Activated CD4-positive, alpha-beta T cell treated with anti-CD3 and anti-CD28 coated beads, Interleukin-2, amount 10 ng/mL, durations not matched to agents 24 days and 14 days (primary cell): ENCODE measurements at regions of chr7 and their contacts with region 1.

Region 1: DNA sequence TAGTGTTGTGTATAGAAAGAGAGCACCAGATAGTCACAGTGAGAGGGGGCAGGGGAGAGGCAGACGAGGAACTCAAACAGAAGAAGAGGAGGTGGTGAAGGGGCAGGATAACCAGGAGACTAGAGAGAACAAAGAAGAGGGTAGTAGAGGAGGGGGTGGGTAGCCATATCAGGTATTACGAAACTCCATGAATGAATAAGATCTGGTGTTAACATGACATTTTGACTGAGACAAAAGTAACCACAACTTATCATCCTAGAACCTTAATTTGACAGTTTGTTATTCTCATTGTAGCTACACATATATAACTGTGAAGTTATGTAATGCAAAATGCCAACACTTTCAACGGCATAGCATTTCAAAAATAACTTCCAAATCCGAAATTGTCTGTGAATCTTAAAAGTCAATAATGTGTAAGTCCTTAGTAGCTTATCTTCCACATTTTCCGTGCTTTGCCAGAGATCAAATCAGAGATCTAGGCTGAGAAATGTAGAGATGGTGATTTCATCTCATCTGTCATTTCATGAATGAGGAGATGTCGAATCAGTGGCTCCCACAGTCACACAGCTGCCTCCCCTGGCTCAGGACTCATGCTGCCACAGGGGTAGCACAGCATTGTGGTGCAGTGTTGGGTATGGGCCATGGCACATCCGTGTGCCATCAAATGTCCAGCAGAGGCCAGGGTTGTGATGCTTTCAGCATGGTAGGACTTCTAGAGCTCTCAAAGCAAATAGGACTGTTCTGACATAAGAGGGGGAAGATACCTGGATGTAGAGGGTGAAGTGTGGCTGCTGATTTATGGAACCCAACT is 202.1 kb downstream of the HECW1 start:
- DNase-seq: no peak
- H3K4me3 Mint-ChIP-seq: no peak overlapping the region
- H3K27ac Mint-ChIP-seq: no peak overlapping the region
- H3K4me1 Mint-ChIP-seq: peaks cover 11% of the 10 kb centered on the region
- H3K27me3 Mint-ChIP-seq: peaks cover 3% of the 10 kb centered on the region

Region 2: DNA sequence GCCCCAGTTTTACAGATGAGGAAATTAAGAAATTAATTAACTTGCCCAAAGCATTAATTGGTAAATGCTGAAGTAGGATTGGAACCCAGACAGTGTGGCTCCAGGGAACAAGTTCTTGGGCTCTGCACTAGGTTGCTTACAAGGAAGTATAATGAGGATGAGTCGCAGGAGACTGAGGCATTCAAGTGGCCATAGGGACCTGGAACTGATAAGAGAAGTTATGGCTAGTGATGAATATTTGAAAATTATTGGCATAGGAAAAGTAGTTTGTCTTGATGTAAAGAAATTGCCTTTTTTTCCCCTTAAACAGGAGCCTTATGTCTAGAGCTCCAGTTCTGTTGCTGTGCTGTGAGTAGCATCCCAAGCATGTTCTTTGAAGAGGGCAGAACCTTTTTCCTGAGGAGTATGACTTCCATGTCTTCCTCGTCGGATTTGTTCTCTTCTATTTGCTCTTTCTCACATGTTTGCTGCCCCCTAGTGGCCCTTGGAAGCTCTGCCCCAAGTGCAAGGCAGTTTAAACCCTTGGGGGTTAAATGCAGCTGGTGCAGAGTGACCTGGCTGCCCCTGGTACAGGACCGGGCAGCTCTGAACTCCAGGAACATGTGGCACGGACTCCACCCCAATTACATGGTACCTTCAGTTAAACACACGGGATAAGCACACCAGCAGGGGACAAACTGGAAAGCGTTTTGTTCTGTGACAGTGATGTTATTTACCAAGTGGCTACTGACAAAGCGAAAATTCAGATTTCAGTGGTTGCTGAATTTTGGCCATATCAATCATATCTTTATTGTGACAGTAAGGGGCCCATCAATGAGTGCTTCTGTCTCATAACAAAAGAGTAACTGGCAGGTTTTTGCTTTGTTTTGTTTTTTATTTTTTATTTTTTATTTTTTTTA is 53.4 kb before region 1 on chr7:
- intact Hi-C with region 1: no loop called
- DNase-seq: peak; percentile 89
- H3K4me3 Mint-ChIP-seq: no peak overlapping the region
- H3K27ac Mint-ChIP-seq: no peak overlapping the region
- H3K4me1 Mint-ChIP-seq: peaks cover 2% of the 10 kb centered on the region
- H3K27me3 Mint-ChIP-seq: peaks cover 9% of the 10 kb centered on the region

Region 3: GRCh38 chr7:43273939-43274719 is 40.5 kb before region 1 on chr7:
- intact Hi-C with region 1: no loop called
- DNase-seq: no peak
- H3K4me3 Mint-ChIP-seq: no peak overlapping the region
- H3K27ac Mint-ChIP-seq: no peak overlapping the region
- H3K4me1 Mint-ChIP-seq: no peaks in the 10 kb centered on the region
- H3K27me3 Mint-ChIP-seq: peaks cover 5% of the 10 kb centered on the region

Region 4: DNA sequence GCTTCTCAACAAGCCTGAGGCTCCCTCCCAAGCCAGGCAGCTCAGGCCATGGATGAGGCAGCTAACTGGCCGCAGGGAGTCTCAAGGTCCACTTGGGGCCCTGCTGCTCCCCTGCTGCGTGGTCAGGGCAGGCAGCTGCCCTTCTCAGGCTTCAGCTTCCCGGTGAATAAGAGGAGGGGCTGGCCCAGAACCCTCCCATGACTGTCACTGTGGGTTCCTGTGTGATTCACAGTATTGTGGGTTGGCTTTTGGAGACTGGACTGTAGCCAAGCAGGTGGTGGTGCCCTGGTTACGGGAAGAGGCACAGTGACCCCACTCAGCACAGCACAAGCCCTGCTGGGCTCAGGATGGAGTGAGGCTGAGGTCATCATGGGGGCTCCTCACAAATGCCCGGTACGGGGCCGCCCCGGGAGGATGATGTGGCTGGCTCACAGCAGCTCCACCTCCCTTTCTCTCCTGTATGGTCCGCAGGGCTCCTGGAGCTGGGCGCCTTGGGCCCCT is 12.3 kb before region 1 on chr7:
- intact Hi-C with region 1: loop called (anchors 1 kb)
- DNase-seq: no peak
- H3K4me3 Mint-ChIP-seq: no peak overlapping the region
- H3K27ac Mint-ChIP-seq: no peak overlapping the region
- H3K4me1 Mint-ChIP-seq: peaks cover 17% of the 10 kb centered on the region
- H3K27me3 Mint-ChIP-seq: no peaks in the 10 kb centered on the region